H1 (cell line): ENCODE measurements at regions of chr12 and their contacts with region 1.

Region 1: GRCh38 chr12:49347384-49348237 is 923 bp downstream of the DNAJC22 start:
- DNase-seq: peak in 1 of 2 experiments; percentile 98
- H3K4me3 ChIP-seq: peak overlapping the region in 3 of 4 experiments; percentile 37 to 69 (median 38); a peak in 6 of 8 replicates
- H3K27ac ChIP-seq: no peak overlapping the region
- H3K4me1 ChIP-seq: peaks cover 4 to 22% (median 15%) of the 10 kb centered on the region in 4 experiments
- H3K27me3 ChIP-seq: peaks cover 49 to 72% (median 70%) of the 10 kb centered on the region in 4 experiments
- CTCF ChIP-seq: peak; percentile 78 to 93 (median 92)
- EP300 ChIP-seq: no peak
- POLR2A ChIP-seq: no peak
- RAD21 ChIP-seq: peak; percentile 39 to 56; a peak in 3 of 4 replicates

Region 2: DNA sequence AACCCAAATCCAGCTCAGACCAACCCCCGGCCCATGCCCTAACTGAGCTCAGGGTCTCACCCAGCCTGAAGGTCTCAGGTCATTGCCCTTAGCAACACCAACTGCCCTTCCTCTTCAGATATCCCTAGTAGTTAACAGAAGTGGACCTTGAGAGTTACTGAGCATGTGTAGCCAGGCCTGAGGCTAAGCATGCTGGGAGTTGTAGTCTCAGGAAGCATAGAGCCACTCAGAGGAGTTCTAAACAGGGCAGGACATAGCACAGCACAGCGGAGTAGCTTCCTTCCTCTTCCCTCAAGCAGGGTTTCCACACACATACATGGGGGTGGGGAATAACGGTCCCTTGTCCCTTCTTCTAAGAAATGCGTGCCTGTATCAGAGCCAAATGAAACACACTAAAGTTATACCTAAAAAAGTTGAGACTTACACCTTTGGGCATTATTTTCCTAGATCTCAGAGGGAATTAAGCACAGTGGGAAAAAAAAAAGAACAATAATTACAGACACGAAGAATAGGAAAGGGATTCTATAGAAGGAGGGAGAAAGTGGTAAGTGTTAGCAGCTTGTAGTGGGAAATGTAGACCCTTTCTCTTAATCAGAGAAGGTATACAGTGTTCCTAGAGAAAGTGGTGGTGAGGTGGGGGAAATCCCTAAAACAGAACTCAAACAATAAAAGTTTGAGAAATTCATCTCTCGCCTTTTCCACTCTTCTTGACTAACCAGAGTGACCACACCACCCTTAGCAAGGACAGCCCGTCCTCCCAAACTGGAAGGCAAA is 291.4 kb before region 1 on chr12:
- CTCF ChIA-PET with region 1: no interaction called
- POLR2A ChIA-PET with region 1: no interaction called
- DNase-seq: no peak
- H3K4me3 ChIP-seq: peak overlapping the region in 1 of 4 experiments; percentile 25; a peak in 3 of 8 replicates
- H3K27ac ChIP-seq: no peak overlapping the region
- H3K4me1 ChIP-seq: peaks cover 9 to 37% (median 13%) of the 10 kb centered on the region in 4 experiments
- H3K27me3 ChIP-seq: no peaks in the 10 kb centered on the region
- CTCF ChIP-seq: no peak
- EP300 ChIP-seq: no peak
- POLR2A ChIP-seq: no peak
- RAD21 ChIP-seq: no peak

Region 3: DNA sequence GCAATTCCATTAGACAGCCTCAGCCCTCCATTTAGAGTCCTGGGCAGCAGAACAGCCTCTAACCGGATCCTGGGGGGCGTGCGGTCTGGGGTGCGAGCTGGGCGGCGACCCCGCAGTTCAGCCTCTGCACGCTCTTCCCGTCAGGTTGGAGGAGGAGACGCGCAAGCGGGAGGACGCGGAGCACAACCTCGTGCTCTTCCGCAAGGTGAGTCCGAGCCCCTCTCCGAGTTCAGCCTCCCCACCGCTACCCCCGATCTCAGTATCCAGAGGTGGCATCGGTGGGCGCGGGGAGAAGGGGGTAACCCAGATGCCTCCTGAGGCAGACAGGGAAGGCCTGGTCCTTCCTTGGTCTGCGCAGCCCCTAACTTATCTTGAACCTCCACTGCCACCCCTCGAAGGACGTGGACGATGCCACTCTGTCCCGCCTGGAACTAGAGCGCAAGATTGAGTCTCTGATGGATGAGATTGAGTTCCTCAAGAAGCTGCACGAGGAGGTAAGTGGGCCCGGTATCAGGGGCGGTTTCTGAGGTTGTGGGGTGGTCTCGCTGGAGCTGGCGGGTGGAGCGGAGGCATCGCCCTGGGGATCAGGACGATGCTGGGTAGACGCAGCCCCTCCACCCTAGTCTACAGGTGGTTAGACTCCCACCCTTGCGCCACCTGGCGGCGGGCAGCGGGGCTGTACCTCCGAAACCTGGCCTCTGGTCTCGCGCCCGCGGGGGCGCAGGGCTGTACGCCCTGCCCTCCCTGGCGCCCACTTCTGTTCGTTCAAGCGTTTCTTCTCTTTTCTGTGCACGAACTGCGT is 51.4 kb before region 1 on chr12:
- CTCF ChIA-PET with region 1: interaction called, 147 read pairs
- POLR2A ChIA-PET with region 1: interaction called, 26 read pairs
- DNase-seq: peak in 1 of 2 experiments; percentile 91
- H3K4me3 ChIP-seq: peak overlapping the region; percentile 4 to 59 (median 34); a peak in 7 of 8 replicates
- H3K27ac ChIP-seq: no peak overlapping the region
- H3K4me1 ChIP-seq: peaks cover 0 to 36% (median 17%) of the 10 kb centered on the region in 4 experiments; a peak in 6 of 7 replicates
- H3K27me3 ChIP-seq: peaks cover 50 to 72% (median 68%) of the 10 kb centered on the region in 4 experiments
- CTCF ChIP-seq: peak in 2 of 3 experiments; percentile 89; a peak in 3 of 4 replicates
- EP300 ChIP-seq: no peak
- POLR2A ChIP-seq: no peak
- RAD21 ChIP-seq: peak; percentile 31 to 42; a peak in 2 of 4 replicates

Region 4: DNA sequence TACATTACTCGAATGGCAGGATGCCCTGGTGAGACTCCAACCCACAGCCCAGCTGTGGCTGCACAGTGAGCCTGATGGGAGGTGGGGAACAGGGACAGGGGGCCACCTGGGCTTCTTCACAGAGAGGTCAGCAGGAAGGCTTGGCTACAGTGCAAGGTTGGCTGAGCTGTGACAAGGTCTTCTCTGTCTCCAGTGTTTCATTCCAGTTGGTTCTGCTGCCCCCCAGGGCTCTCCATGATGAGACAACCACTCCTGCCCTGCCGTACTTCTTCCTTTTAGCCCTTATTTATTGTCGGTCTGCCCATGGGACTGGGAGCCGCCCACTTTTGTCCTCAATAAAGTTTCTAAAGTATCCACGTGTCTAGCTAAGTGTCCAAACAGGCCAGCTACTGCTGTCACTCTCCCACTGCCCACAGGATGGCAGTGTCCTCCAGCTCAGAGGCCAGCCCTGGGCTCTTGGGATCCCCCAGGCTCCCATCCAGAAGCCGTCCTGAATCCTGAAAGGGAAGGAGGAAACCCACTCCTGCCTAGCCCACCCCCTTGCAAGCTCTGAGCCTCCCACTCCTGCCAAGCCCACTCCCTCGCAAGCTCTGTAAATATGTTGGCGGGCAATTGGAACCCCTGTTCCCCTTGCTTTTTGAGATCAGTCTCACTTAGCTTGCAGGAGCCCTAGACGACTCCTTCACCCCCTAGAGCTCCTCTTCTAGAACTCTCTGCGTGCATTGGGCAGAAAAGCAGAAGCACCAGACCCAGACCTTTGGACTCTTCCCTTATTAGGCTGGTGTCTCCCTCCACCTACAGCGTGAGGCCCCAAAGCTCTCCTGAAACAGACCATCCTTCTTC is 16.0 kb before region 1 on chr12:
- CTCF ChIA-PET with region 1: interaction called, 193 read pairs
- POLR2A ChIA-PET with region 1: interaction called, 32 read pairs
- DNase-seq: peak in 1 of 2 experiments; percentile 68
- H3K4me3 ChIP-seq: no peak overlapping the region
- H3K27ac ChIP-seq: no peak overlapping the region
- H3K4me1 ChIP-seq: no peaks in the 10 kb centered on the region; a peak in 2 of 7 replicates
- H3K27me3 ChIP-seq: peaks cover 33 to 50% (median 43%) of the 10 kb centered on the region in 4 experiments
- CTCF ChIP-seq: peak; percentile 86 to 89 (median 88)
- EP300 ChIP-seq: no peak
- POLR2A ChIP-seq: no peak
- RAD21 ChIP-seq: peak; percentile 86 to 93

Region 5: DNA sequence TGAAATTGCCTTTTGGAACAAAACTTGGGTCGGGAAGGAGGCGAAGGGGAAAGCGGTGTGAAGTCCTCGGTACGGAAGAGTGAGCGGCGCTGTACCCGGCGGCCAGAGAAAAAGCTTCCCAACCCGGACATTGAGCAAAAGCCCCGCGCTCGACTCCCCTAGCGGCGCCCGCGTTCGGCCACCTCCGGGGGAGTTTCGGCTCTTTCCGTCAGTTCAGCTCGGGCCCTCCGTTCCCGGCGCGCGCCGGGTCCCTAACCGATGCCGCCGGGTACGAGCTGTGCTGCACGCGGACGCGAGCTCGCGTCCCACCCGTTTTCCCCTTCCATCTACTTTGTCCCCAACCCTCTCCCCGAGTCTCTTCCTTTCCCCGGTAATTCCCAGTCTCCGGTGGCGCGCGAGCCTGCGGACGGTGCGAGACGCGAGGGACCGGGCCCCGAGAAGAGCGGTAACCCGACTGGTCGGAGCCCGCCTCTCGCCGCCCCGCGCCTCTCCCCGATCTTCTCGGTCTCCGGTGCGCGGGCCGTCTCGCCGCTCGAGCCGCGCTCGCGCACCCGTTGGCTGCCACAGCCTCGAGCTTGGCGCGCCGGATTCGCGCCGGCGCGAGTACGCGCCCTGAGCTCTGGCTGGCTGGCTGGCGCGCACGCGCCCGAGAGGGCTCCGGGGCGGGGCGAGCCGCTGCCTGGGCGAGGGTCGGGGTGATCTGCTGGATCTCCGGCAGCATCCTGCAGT is 19.2 kb after region 1 on chr12:
- CTCF ChIA-PET with region 1: interaction called, 19 read pairs
- POLR2A ChIA-PET with region 1: interaction called, 8 read pairs
- DNase-seq: peak; percentile 86 to 94
- H3K4me3 ChIP-seq: peak overlapping the region; percentile 80 to 95 (median 86)
- H3K27ac ChIP-seq: peak overlapping the region; percentile 90
- H3K4me1 ChIP-seq: peaks cover 0 to 8% (median 2%) of the 10 kb centered on the region in 4 experiments; a peak in 3 of 7 replicates
- H3K27me3 ChIP-seq: peaks cover 0 to 3% (median 0%) of the 10 kb centered on the region in 4 experiments; a peak in 3 of 7 replicates
- CTCF ChIP-seq: peak in 2 of 3 experiments; percentile 2 to 15; a peak in 2 of 4 replicates
- EP300 ChIP-seq: no peak
- POLR2A ChIP-seq: peak; percentile 70 to 91
- RAD21 ChIP-seq: 0 out of 4 replicates have a peak, but pooled peaks of 1 of the 2 experiments have one; percentile 5

Region 6: DNA sequence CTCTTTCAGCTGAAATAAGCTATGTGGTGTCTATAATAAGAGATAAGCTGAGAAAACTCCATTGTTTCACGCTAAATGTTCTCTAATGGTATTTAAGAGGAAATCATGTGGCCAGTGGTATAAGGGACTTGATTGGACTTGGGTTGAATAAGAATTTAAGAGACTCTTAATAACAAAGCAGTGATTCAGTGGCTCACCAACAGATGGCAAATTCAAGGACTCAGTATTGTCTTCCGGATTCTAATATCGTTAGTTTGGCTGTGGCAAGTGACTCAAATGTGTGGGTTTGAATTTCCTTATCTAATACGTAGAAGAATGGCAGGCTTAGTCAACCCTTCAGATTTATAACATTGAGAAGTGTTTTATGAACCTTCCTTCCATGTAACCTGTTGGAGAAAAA is 142.1 kb after region 1 on chr12:
- CTCF ChIA-PET with region 1: no interaction called
- POLR2A ChIA-PET with region 1: no interaction called
- DNase-seq: no peak
- H3K4me3 ChIP-seq: no peak overlapping the region
- H3K27ac ChIP-seq: no peak overlapping the region
- H3K4me1 ChIP-seq: peaks cover 0 to 4% (median under 1%) of the 10 kb centered on the region in 4 experiments; a peak in 2 of 7 replicates
- H3K27me3 ChIP-seq: no peaks in the 10 kb centered on the region
- CTCF ChIP-seq: no peak
- EP300 ChIP-seq: no peak
- POLR2A ChIP-seq: no peak
- RAD21 ChIP-seq: no peak

Region 7: DNA sequence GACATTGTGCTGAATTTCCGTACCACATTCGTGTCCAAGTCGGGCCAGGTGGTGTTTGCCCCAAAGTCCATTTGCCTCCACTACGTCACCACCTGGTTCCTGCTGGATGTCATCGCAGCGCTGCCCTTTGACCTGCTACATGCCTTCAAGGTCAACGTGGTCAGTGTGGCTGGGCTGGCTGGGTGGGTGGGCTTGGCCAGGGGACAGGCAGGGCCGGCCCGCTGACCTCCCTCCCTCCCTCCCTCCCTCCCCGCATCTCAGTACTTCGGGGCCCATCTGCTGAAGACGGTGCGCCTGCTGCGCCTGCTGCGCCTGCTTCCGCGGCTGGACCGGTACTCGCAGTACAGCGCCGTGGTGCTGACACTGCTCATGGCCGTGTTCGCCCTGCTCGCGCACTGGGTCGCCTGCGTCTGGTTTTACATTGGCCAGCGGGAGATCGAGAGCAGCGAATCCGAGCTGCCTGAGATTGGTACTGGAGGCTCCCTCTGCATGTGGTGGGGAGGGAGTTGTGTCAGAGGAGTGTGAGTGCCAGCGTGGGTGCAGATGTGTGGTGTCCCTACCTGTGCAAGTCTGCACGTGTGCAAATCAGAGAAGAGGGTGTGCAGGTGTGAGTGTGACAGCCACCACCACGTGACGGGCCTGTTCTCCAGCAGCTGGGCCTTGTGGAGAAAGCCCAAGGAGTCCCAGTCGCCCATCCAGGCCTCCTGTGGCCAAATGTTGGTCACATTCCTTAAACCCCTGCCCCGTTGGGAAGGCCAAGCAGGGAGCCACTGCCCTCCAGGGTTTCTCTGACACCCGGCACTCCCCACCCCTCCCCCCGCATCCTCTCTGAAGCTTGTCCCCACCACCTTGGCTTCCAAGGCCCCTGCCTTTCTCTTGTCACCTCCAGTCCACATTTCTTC is 196.6 kb after region 1 on chr12:
- CTCF ChIA-PET with region 1: interaction called, 16 read pairs
- POLR2A ChIA-PET with region 1: no interaction called
- DNase-seq: no peak
- H3K4me3 ChIP-seq: peak overlapping the region; percentile 32 to 51 (median 44)
- H3K27ac ChIP-seq: no peak overlapping the region
- H3K4me1 ChIP-seq: peaks cover 0 to 31% (median 17%) of the 10 kb centered on the region in 4 experiments; a peak in 6 of 7 replicates
- H3K27me3 ChIP-seq: peaks cover 46 to 98% (median 94%) of the 10 kb centered on the region in 4 experiments
- CTCF ChIP-seq: no peak
- EP300 ChIP-seq: no peak
- POLR2A ChIP-seq: no peak
- RAD21 ChIP-seq: no peak

Region 8: DNA sequence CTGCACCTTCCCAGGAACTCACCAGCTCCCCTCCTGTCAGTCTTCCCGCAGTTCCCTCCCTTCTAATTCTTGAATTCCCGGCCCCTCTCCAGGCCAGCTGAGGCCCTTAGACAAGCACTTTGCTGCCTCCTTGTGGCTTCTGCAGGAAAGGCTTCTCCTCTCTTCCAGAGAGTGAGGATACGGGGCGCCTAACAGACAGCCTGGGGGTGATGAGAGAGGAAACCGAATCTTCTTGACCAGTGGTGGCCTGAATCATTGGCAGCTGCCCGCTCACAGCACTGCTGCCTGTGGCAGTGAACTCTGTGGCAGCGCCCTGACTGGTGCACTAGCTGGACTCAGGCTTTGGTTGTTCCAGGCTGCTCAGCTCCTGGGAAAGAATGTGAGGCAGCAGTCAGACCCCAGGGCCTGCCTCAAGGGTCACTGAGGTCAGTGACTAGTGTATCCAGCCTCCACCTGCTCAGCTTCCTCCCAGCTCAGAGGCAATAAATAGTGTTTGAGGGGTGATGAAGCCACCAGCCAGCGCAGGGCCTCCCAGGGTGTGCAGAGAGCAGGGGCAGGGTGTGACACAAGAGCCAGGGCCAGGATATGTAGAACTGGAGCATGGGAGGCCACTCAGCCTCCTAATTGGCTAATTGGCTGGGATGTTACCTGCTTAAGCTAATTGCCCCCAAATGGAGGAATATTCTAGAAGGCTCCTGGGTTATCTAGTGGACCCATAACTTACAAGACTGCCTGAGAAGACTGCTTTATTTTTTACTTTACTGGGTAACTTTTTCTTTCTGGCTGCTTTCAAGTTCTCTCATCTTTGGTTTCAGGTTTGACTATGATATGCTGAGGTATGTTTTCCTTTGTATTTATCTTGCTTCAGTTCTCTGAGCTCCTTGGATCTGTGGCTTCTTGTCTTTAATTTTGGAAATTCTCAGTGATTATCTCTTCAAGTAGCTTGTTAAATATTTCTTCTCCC is 233.2 kb after region 1 on chr12:
- CTCF ChIA-PET with region 1: interaction called, 13 read pairs
- POLR2A ChIA-PET with region 1: no interaction called
- DNase-seq: peak; percentile 77 to 92
- H3K4me3 ChIP-seq: no peak overlapping the region
- H3K27ac ChIP-seq: no peak overlapping the region
- H3K4me1 ChIP-seq: peaks cover 0 to 6% (median 4%) of the 10 kb centered on the region in 4 experiments; a peak in 4 of 7 replicates
- H3K27me3 ChIP-seq: no peaks in the 10 kb centered on the region
- CTCF ChIP-seq: peak; percentile 74 to 97 (median 94)
- EP300 ChIP-seq: no peak
- POLR2A ChIP-seq: no peak
- RAD21 ChIP-seq: peak; percentile 88